HEK293T (cell line): ENCODE measurements at regions of chr12 and their contacts with region 1.

Region 1: GRCh38 chr12:50167041-50167828 is at the start of gene CERS5:
- DNase-seq: peak; percentile 96

Region 2: DNA sequence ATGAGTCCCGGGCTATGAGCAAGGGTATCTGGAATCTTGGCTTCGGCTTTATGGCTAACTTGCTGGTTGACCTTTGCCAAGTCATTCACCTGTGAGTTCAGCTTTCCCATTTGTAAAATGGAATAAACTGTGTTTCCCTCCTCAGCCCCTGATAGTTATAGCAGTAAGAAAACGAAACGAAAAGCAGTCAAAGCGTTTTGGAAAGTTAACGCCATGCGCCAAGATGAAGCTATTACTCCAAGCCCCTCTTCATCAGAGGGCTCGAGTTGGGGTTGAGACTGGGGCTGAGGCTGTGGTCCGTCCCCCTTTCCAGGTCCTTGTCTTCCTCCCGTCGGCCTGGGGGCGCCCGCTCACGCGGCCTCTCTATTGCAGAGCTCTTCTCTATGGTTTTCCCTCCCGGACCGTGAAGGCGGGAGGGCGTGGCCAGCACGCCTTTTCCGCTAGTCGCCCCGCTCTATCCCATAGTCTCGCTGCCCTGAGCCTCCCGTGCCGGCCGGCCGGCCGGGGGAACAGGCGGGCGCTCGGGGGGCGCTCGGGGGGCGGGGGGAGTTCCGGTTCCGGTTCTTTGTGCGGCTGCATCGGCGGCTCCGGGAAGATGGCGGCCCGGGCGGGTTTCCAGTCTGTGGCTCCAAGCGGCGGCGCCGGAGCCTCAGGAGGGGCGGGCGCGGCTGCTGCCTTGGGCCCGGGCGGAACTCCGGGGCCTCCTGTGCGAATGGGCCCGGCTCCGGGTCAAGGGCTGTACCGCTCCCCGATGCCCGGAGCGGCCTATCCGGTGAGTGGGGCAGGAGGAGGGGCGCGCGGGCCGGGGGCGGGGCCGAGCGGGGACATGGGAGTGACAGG is 82.2 kb before region 1 on chr12 and contains the start of gene SMARCD1:
- CTCF ChIA-PET with region 1: no interaction called
- POLR2A ChIA-PET with region 1: interaction called, 31 read pairs
- DNase-seq: peak; percentile 88

Region 3: GRCh38 chr12:50103767-50104321 is 63.4 kb before region 1 on chr12 and contains the start of gene GPD1:
- CTCF ChIA-PET with region 1: no interaction called
- POLR2A ChIA-PET with region 1: interaction called, 10 read pairs
- DNase-seq: no peak

Region 4: GRCh38 chr12:50123203-50123602 is 44.0 kb before region 1 on chr12:
- CTCF ChIA-PET with region 1: no interaction called
- POLR2A ChIA-PET with region 1: no interaction called
- DNase-seq: no peak

Region 5: DNA sequence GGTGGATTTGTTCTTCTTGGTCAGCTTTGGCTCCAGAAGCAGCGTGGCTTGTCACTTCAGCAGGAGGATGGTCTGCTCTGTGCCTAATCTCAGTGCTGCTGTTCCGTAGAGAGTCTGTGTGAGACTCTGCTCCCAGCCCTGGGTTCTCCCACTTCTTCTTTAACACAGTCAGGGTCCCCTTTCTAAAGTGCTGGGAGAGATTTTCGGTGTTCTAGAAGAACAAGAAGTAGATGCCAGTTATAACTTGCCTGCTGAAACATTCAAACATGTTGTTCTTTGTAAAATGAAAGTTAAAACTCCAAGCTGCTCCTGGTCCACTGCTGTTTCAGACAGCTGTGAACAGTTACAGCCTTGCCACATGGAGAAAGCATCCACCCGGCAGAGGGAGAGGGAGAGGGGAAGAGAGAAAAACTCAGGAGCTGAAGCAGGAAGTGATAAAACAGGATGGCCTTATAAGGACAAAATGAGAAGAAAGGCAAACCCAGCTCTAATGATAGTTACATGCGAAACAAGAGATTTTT is 55.1 kb after region 1 on chr12:
- CTCF ChIA-PET with region 1: no interaction called
- POLR2A ChIA-PET with region 1: interaction called, 19 read pairs
- DNase-seq: peak; percentile 60